OCI-LY7 (cell line): ENCODE measurements at regions of chr1 and their contacts with region 1.

Region 1: DNA sequence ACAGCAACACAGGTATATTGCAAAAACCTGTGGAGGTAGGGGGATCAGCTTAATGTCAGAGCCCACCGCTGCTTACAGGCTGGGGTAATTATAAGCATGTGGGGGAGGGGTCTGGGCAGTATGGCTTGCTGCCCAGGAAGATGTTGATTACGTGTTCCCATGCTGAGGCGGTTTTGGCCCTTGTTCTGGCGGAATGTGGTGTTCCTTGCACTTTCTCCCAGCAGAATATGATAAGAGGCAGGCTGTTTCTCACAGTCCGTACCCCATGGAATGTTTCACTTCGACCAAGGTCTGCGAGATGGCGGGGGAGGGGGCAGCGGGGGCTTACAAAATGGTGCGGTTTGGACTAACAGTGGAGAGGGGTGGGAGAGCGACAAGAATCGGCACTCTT is 9.8 kb upstream of the HPCAL4 start:
- DNase-seq: no peak
- H3K4me3 ChIP-seq: no peak overlapping the region
- H3K27ac ChIP-seq: no peak overlapping the region
- H3K4me1 ChIP-seq: no peaks in the 10 kb centered on the region
- CTCF ChIP-seq: no peak

Region 2: DNA sequence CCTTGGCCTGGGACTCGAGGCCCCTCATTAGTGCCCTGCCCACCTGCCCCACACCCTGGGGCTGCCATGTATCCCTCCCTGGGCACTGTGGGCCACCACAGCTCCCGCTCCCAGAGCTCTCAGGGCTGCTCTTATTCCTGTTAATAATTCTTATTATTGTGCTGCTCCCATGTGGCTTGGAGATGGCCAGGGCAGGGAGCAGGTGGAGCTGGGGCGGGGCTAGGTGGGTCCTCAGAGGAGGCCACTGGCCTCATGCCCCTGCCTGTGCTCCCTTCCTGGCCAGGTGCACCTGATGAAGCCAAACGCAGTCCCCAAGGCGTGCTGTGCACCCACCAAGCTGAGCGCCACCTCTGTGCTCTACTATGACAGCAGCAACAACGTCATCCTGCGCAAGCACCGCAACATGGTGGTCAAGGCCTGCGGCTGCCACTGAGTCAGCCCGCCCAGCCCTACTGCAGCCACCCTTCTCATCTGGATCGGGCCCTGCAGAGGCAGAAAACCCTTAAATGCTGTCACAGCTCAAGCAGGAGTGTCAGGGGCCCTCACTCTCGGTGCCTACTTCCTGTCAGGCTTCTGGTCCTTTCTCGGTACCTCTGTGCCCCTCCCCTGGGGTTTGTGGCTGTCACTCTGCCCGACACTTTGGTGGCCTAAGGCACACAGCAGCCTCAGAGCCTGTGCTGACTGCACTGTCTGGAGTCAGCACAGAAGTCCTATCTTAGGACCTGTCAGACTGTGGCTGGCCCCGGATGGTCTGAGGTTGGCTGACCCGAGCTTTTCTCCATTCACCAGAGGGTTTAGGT is 175.5 kb before region 1 on chr1:
- CTCF ChIA-PET with region 1: no interaction called
- POLR2A ChIA-PET with region 1: no interaction called
- intact Hi-C with region 1: no loop called
- DNase-seq: peak; percentile 89
- H3K4me3 ChIP-seq: no peak overlapping the region
- H3K27ac ChIP-seq: peak overlapping the region; percentile 41
- H3K4me1 ChIP-seq: peaks cover 29% of the 10 kb centered on the region
- CTCF ChIP-seq: no peak

Region 3: GRCh38 chr1:39799770-39800470 is 98.9 kb after region 1 on chr1:
- CTCF ChIA-PET with region 1: no interaction called
- POLR2A ChIA-PET with region 1: no interaction called
- intact Hi-C with region 1: loop called (anchors 2 kb)
- DNase-seq: peak; percentile 66
- H3K4me3 ChIP-seq: peak overlapping the region; percentile 54
- H3K27ac ChIP-seq: peak overlapping the region; percentile 52
- H3K4me1 ChIP-seq: peaks cover 11% of the 10 kb centered on the region
- CTCF ChIP-seq: peak; percentile 73; the same call in 1 of the 2 replicates

Region 4: GRCh38 chr1:40167317-40167716 is 466.3 kb after region 1 on chr1:
- CTCF ChIA-PET with region 1: no interaction called
- POLR2A ChIA-PET with region 1: no interaction called
- intact Hi-C with region 1: no loop called
- DNase-seq: no peak
- H3K4me3 ChIP-seq: no peak overlapping the region
- H3K27ac ChIP-seq: no peak overlapping the region
- H3K4me1 ChIP-seq: peaks cover 19% of the 10 kb centered on the region
- CTCF ChIP-seq: peak; percentile 61